Mammary epithelial cell (primary cell): ENCODE measurements at regions of chr12 and their contacts with region 1.

Region 1: GRCh38 chr12:55738123-55739024 is 4.5 kb upstream of the GDF11 start:
- DNase-seq: peak; percentile 70
- H3K4me3 ChIP-seq: peak overlapping the region; percentile 55 to 64 (median 56)
- H3K27ac ChIP-seq: peak overlapping the region; percentile 31
- H3K4me1 ChIP-seq: peaks cover 8% of the 10 kb centered on the region
- H3K27me3 ChIP-seq: no peaks in the 10 kb centered on the region
- CTCF ChIP-seq: peak; percentile 73 to 82

Region 2: GRCh38 chr12:55659486-55660385 is 78.6 kb before region 1 on chr12:
- CTCF ChIA-PET with region 1: no interaction called
- dilution Hi-C with region 1: no loop called
- in situ Hi-C with region 1: no loop called
- intact Hi-C with region 1: loop called (anchors 1 kb)
- DNase-seq: no peak
- H3K4me3 ChIP-seq: no peak overlapping the region
- H3K27ac ChIP-seq: no peak overlapping the region
- H3K4me1 ChIP-seq: no peaks in the 10 kb centered on the region
- H3K27me3 ChIP-seq: no peaks in the 10 kb centered on the region
- CTCF ChIP-seq: peak; percentile 31 to 40

Region 3: DNA sequence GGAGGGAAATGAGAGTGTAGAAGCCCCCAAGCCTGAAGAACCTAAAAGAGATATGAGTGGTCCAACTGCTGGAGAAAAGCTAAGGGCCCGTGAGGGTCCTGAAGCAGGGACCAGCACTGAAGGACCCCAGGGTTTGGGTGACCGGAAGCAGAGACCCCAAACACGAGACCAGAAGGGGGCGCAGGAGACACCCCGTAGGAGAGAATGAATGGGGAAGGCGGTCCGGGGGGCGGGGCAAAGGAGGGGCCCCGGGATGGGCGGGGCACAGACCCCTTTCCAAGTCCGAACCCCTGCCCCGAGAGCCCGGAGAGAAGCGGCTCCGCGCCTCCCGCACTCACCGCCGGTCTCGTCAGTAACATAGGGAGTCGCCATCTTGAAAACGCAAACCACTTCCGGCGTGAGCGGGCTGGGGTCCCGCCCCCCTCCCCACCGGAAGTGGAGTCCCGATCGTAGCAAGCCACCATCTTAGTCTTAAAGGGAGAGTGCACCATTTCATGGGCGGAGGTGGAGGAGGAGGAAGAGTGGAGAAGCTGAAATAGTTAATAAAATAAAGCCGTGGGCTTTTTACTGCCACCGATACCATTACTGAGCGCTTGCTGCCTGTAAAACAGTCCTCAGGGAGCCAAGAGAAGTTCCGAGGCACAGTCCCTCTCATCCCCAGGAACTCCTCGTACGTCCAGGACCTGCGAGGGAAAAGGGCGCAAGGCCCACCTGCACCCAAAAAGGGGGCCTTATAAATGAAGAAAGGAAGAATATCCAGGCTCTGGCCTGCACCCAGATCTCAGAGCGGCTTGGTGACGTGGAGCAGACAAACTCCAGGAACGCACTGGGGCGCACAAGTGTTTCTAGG is 188.6 kb after region 1 on chr12:
- CTCF ChIA-PET with region 1: no interaction called
- dilution Hi-C with region 1: no loop called
- in situ Hi-C with region 1: no loop called
- intact Hi-C with region 1: loop called (anchors 2 kb)
- DNase-seq: peak; percentile 91
- H3K4me3 ChIP-seq: peak overlapping the region; percentile 70 to 92 (median 77)
- H3K27ac ChIP-seq: peak overlapping the region; percentile 83
- H3K4me1 ChIP-seq: peaks cover 41% of the 10 kb centered on the region
- H3K27me3 ChIP-seq: no peaks in the 10 kb centered on the region
- CTCF ChIP-seq: peak; percentile 41 to 82

Region 4: DNA sequence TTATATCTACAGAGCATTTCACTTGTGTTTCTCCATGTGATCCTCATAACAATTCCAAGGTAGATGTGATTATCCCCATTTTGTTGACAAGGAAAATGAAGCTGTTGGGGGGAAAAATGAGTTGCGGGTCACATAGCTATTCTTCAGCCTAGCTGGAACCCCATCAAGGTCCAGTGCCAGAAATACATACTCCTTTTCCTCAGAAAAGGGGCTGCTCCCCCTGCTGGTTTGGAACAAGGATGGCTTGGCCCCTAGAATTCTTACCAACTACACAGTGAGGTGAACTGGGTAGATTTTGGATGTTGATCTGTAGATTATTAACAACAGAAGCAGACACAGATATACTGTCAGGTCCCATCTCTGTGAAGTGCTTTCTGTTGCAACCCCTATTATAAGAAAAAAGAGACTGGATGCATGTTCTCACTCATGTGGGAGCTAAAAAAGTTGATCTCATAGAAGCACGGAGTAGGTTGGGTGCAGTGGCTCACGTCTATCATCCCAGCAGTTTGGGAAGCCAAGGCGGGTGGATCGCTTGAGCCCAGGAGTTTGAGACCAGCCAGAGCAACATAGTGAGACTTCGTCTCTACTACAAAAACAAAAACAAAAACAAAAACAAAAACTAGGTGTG is 291.4 kb after region 1 on chr12:
- CTCF ChIA-PET with region 1: interaction called, 5 read pairs
- dilution Hi-C with region 1: no loop called
- in situ Hi-C with region 1: no loop called
- intact Hi-C with region 1: loop called (anchors 1 kb)
- DNase-seq: no peak
- H3K4me3 ChIP-seq: no peak overlapping the region
- H3K27ac ChIP-seq: no peak overlapping the region
- H3K4me1 ChIP-seq: peaks cover 13% of the 10 kb centered on the region
- H3K27me3 ChIP-seq: no peaks in the 10 kb centered on the region
- CTCF ChIP-seq: peak; percentile 76 to 87

Region 5: DNA sequence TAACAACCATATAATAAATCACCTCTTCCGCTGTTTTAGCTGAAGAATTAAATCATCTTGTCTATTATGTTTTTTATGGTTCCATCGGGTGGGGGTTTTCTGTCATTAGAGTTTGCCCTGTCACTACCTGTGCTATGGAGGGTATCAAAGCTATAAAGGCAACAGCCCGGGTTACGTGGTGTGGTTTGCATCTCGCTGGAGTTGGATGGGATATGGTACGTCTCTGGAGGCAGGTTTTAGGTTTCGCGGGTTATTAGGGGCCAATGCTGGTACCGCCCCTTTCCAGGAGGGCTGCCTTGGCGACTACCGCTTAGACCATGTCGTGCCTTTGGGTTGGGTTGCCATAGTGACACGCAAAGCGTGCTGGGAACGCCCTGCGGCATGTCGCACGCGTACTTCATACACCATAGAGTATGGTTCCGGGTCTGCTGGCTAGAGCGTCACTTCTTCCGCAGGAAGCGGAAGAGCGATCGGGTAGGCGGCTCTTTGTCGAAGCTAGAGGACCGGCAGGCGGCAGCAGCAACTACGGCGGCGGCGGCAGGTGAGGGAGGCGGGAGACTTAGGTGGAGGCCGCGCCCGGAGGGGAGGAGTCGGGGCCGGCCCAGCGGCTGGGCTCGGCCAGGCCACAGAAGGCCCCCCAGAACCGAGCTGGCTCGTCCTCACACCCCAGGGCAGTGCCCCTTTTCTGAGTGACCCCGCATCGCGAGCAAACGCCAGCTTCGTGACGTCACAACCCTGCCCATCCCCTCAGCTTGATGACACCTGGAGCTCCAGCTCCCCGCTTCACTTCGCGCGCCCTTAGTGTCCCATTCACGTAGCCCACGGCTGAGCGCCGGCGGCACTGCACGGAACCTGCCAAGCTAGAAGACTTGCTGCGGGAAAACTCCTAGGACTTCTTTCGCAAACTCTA is 379.7 kb after region 1 on chr12 and contains the start of gene ZC3H10:
- CTCF ChIA-PET with region 1: no interaction called
- dilution Hi-C with region 1: no loop called
- in situ Hi-C with region 1: no loop called
- intact Hi-C with region 1: loop called (anchors 2 kb)
- DNase-seq: peak; percentile 99
- H3K4me3 ChIP-seq: peak within 1 kb of the TSS; percentile 57 to 80 (median 77)
- H3K27ac ChIP-seq: peak within 1 kb of the TSS; percentile 91
- H3K4me1 ChIP-seq: peaks cover 31% of the 10 kb centered on the region
- H3K27me3 ChIP-seq: no peaks in the 10 kb centered on the region
- CTCF ChIP-seq: peak; percentile 23 to 65
- total RNA-seq, gene ZC3H10: 2.7 TPM

Region 6: GRCh38 chr12:56461235-56462159 is 723.1 kb after region 1 on chr12:
- CTCF ChIA-PET with region 1: interaction called, 3 read pairs
- dilution Hi-C with region 1: no loop called
- in situ Hi-C with region 1: no loop called
- intact Hi-C with region 1: loop called (anchors 5 kb)
- DNase-seq: peak; percentile 24
- H3K4me3 ChIP-seq: no peak overlapping the region
- H3K27ac ChIP-seq: no peak overlapping the region
- H3K4me1 ChIP-seq: no peaks in the 10 kb centered on the region
- H3K27me3 ChIP-seq: no peaks in the 10 kb centered on the region
- CTCF ChIP-seq: no peak